PC-9 (cell line): ENCODE measurements at regions of chr7 and their contacts with region 1.

Region 1: DNA sequence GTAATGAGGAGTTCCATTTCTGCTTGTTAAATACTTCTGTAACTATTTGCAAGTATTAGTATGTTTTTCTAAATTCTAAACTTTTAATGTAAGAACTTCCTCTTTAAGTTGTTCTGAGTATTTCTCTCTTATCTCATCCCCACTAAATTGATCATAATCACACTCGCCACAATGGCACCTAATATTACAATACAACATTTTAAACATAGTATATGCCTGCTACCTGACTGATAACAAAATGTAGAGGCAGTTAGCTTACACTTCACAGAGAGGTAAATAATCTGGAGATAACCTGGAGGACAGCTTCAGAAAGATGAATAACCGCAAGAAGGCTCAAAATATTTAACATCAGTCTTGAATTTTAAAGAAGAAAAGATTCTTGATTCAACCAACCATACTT is 48.6 kb downstream of the HIBADH start:
- DNase-seq: no peak
- H3K4me3 ChIP-seq: no peak overlapping the region
- H3K27ac ChIP-seq: no peak overlapping the region
- H3K4me1 ChIP-seq: peaks cover 19% of the 10 kb centered on the region
- H3K27me3 ChIP-seq: no peaks in the 10 kb centered on the region
- CTCF ChIP-seq: no peak

Region 2: DNA sequence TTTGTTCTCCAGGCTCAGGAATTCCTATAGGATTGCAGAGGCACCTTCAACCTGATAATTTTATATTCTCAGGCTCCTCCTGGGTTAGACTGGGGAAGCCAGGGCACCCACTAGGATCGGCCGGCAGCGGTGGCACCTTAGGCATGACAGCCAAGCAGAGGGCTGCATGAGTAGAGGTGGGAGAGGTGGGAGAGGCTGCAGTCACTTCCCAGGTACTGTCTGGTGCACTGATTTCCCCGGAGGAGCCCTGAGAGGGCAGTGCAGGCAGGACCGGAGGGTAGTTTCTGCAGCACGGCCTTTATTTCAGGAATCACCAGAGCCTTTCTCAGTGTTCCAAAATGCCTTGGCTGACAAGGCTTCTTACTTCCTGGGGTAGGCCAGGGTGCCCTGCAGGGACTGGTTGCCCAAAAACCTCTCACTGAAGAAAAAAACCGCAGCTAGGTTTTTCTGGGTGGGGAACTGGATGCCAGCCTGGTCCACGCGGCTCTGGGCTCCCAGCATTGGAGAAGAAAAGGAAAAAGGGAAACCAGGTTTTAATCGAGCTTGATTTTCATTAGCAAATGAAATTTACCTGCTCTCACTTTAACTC is 410.6 kb before region 1 on chr7:
- CTCF ChIA-PET with region 1: interaction called, 10 read pairs
- POLR2A ChIA-PET with region 1: no interaction called
- intact Hi-C with region 1: no loop called
- DNase-seq: no peak
- H3K4me3 ChIP-seq: no peak overlapping the region
- H3K27ac ChIP-seq: no peak overlapping the region
- H3K4me1 ChIP-seq: no peaks in the 10 kb centered on the region
- H3K27me3 ChIP-seq: peaks cover 14% of the 10 kb centered on the region; the same call in 1 of the 2 replicates
- CTCF ChIP-seq: no peak